ENCODE measurements at regions of chr12 and their contacts with region 1.

Region 1: DNA sequence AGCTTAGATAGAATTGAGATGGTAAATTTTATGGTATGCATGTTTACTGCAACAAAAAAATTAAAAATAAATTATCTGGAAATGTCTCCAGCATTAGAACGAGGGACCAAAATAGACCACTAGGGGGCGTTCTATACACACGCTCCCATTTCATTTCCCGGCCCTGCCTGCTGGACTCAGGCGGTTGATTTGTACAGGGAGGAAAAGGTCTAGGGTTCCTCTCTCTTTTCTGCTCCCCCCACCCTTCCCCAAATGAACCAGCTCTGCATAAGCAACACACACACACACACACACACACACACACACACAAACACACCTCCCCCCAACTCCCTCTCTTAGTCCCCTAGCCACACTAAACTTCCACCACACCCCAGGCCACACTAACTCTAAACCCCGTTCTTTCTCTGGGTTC is 7.8 kb upstream of the DTX1 start:
- DNase-seq: peak; percentile 80
- ATAC-seq: peak; percentile 88
- H3K4me3 Mint-ChIP-seq: no peak overlapping the region
- H3K27ac Mint-ChIP-seq: no peak overlapping the region
- H3K4me1 Mint-ChIP-seq: no peaks in the 10 kb centered on the region
- H3K27me3 Mint-ChIP-seq: peaks cover 10% of the 10 kb centered on the region

Region 2: GRCh38 chr12:113005754-113006153 is 43.0 kb before region 1 on chr12:
- CTCF ChIA-PET with region 1: no interaction called
- POLR2A ChIA-PET with region 1: no interaction called
- DNase-seq: no peak
- ATAC-seq: no peak
- H3K4me3 Mint-ChIP-seq: no peak overlapping the region
- H3K27ac Mint-ChIP-seq: no peak overlapping the region
- H3K4me1 Mint-ChIP-seq: no peaks in the 10 kb centered on the region
- H3K27me3 Mint-ChIP-seq: no peaks in the 10 kb centered on the region

Region 3: DNA sequence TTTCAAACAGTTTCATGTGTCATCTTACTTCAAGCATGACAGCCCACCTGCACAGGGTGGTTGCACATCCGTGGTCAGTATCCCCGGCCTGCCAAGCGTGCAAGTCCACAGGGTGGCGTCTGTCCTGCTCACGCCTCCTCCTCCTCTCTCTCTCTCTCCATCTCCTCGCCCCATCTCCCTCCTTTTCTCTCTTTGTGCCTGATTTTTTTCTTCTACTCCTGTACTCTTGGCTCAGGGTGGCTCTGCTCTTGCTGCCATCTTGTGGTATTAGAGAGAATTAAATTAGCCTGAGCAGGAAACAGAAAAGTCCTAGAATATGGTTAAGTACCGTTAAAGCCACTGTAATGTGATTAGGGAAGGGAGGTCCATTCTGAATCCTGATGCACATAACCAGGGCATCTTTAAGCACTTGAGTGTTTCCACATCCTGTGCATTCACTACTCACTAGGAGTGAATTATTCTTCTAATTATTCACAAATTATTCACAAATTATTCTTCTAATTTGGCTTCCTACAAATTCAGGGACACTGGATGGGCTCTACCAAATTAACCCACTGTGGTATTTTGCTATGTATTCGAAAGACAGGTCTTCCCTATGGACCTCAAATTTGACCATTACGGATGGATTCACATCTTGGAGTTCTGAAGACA is 17.7 kb before region 1 on chr12:
- CTCF ChIA-PET with region 1: interaction called, 10 read pairs
- POLR2A ChIA-PET with region 1: no interaction called
- DNase-seq: no peak
- ATAC-seq: no peak
- H3K4me3 Mint-ChIP-seq: no peak overlapping the region
- H3K27ac Mint-ChIP-seq: no peak overlapping the region
- H3K4me1 Mint-ChIP-seq: no peaks in the 10 kb centered on the region
- H3K27me3 Mint-ChIP-seq: peaks cover 11% of the 10 kb centered on the region

Region 4: DNA sequence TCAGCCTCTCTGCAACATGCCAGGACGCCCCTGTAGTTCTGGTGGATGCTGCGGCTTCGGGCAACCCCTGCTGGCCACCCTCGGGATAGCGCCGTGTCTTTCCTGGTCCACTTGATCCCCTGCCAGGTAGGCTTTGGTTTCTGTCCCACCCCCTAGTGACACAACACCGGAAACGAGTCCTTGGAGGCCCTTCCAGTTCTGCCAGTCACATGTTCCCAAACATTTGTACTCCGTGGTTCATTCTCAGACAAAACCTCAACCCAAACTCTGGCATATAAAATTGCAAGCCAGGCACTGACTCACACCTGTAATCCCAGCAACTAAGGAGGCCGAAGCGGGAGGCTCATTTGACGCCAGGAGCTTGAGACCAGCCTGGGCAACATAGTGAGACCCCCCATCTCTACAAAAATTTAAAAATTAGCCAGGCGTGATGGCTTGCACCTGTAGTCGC is 49.7 kb after region 1 on chr12:
- CTCF ChIA-PET with region 1: interaction called, 53 read pairs
- POLR2A ChIA-PET with region 1: no interaction called
- DNase-seq: peak; percentile 77
- ATAC-seq: peak; percentile 70
- H3K4me3 Mint-ChIP-seq: no peak overlapping the region
- H3K27ac Mint-ChIP-seq: no peak overlapping the region
- H3K4me1 Mint-ChIP-seq: peaks cover 7% of the 10 kb centered on the region
- H3K27me3 Mint-ChIP-seq: peaks cover 4% of the 10 kb centered on the region